Transverse colon (tissue), 4 donors: ENCODE measurements at regions of chr20 and their contacts with region 1.

Region 1: GRCh38 chr20:35699127-35699975 is at the starts of genes NFS1 and ROMO1:
- DNase-seq: peak; percentile 87
- H3K4me3 ChIP-seq: peak within 1 kb of the TSS; percentile 66 to 91 (median 82)
- H3K27ac ChIP-seq: peak within 1 kb of the TSS; percentile 91 to 95 (median 92)
- H3K4me1 ChIP-seq: peaks cover 0 to 32% (median 19%) of the 10 kb centered on the region in 4 donors
- H3K27me3 ChIP-seq: no peaks in the 10 kb centered on the region
- CTCF ChIP-seq: peak in 3 of 5 experiments; percentile 18 to 28 (median 28)
- EP300 ChIP-seq: no peak
- POLR2A ChIP-seq: peak; percentile 65
- total RNA-seq, gene NFS1: 28.4 to 54.1 (median 42.0) TPM
- total RNA-seq, gene ROMO1: 114 to 416 (median 182) TPM

Region 2: DNA sequence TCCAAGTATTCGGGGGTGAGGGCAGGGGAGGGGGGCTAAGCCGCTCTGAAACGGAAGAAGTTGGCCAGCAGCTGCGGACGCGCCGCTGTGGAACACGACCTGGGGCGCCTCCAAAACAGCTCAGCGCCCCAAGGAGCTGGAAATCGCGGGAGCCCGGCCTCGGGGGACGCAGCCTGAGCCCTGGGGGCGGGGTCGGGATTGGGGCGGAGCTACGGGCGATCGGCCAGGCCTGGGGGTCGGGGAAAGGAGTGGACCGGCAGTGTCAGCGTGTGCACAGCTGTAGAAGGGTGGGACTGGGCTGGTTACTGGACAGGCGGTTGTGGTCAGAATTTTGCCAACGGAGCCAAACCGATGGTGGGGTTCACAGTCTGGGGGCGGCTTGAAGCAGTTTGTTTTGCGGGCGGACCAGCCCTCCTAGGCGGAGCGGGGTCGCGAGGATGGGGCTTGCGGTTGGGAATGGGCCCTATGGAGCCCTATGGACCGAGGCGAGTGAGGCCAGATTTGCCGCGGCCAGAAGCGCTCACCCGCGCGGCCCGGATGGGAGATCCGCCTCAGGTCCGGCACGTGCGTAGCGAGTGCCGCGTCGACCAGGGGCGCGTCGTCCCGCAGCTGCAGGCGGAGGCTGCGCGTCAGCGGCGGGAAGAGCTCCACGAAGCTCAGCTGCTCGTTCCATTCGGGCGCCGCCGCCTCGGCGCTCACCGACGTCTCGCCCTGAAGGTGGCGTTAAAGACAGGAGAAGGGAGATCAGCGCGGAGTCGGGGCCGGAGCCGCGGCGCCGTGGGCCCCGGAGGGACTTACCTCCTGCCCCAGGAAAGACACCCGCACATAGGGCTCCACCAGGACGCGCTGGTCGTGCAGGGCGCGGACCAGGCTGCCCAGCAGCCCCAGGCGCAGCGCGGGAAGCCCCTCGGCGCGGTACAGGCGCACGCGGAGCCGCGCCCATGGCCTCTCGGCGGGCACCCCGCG is 98.1 kb before region 1 on chr20:
- in situ Hi-C with region 1: no loop called
- intact Hi-C with region 1: loop called (anchors 10 kb)
- DNase-seq: peak; percentile 86
- H3K4me3 ChIP-seq: peak overlapping the region; percentile 14 to 55 (median 32)
- H3K27ac ChIP-seq: peak overlapping the region in 3 of 4 donors; percentile 24 to 33 (median 30)
- H3K4me1 ChIP-seq: peaks cover 7 to 18% (median 15%) of the 10 kb centered on the region in 4 donors
- H3K27me3 ChIP-seq: peaks cover 19% of the 10 kb centered on the region
- CTCF ChIP-seq: peak; percentile 14 to 51 (median 44)
- EP300 ChIP-seq: no peak
- POLR2A ChIP-seq: no peak

Region 3: GRCh38 chr20:35771689-35772562 is 72.6 kb after region 1 on chr20 and contains the start of gene PHF20:
- in situ Hi-C with region 1: no loop called
- intact Hi-C with region 1: loop called (anchors 5 kb)
- DNase-seq: peak; percentile 100
- H3K4me3 ChIP-seq: peak within 1 kb of the TSS; percentile 63 to 83 (median 78)
- H3K27ac ChIP-seq: peak within 1 kb of the TSS; percentile 88 to 98 (median 94)
- H3K4me1 ChIP-seq: peaks cover 28 to 81% (median 42%) of the 10 kb centered on the region in 4 donors
- H3K27me3 ChIP-seq: no peaks in the 10 kb centered on the region
- CTCF ChIP-seq: peak in 2 of 5 experiments; percentile 3 to 19
- EP300 ChIP-seq: peak; percentile 98
- POLR2A ChIP-seq: peak; percentile 71
- total RNA-seq, gene PHF20: 20.6 to 88.6 (median 43.1) TPM

Region 4: GRCh38 chr20:35883778-35884540 is 184.6 kb after region 1 on chr20:
- in situ Hi-C with region 1: loop called in 2 of 4 experiments (anchors 25 kb)
- intact Hi-C with region 1: no loop called
- DNase-seq: peak; percentile 57
- H3K4me3 ChIP-seq: no peak overlapping the region
- H3K27ac ChIP-seq: peak overlapping the region; percentile 62 to 84 (median 74)
- H3K4me1 ChIP-seq: peaks cover 0 to 6% (median 2%) of the 10 kb centered on the region in 4 donors
- H3K27me3 ChIP-seq: no peaks in the 10 kb centered on the region
- CTCF ChIP-seq: peak; percentile 52 to 65 (median 53)
- EP300 ChIP-seq: no peak
- POLR2A ChIP-seq: no peak